IMR-90 (cell line): ENCODE measurements at regions of chr6 and their contacts with region 1.

Region 1: GRCh38 chr6:28586962-28587745 is 61.5 kb downstream of the GPX5 start:
- DNase-seq: no peak
- ATAC-seq: no peak
- H3K4me3 ChIP-seq: peak overlapping the region; percentile 40
- H3K27ac ChIP-seq: no peak overlapping the region
- H3K4me1 ChIP-seq: no peaks in the 10 kb centered on the region
- H3K27me3 ChIP-seq: peaks cover 2% of the 10 kb centered on the region; the same call in 1 of the 2 replicates
- CTCF ChIP-seq: no peak
- POLR2A ChIP-seq: no peak
- RAD21 ChIP-seq: no peak

Region 2: DNA sequence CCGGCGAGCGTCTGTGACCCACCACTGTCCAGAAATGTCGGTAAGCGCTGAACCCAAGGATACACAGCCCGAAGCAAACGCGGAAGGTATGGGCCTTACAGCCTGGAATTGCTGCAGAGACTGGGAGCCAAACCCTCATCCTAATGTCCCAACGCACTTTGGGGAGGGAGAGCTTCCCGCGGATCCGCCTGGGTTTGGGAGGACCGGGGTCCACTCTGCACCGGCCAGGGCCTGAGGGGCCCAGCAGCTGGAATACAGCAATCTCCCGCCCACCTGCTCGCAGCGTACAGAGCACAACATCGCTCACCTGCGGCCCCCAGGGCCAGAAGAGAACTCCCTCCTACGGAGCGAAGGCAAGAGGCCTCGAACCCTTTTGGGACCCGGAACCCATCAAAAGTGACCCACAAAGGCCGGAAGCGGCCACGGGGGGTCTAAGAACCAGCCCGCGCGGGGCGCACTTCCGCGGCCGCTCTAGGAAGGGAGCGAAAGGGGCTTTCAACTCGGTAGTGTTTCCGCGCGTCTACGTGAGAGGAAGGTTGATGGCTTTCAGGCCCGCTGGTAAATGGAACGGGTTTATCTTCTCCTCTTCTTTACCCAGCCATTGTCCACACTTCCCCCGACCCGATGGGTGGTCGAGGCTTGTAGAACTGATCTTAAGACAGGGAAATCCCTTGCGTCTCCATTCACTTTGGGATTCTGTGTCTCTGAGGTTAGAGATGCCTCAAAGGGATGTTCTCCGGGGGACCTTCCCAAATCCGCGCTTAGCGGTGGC is 187.6 kb before region 1 on chr6 and contains the start of gene ZSCAN12:
- CTCF ChIA-PET with region 1: no interaction called
- POLR2A ChIA-PET with region 1: no interaction called
- dilution Hi-C with region 1: no loop called
- in situ Hi-C with region 1: no loop called
- intact Hi-C with region 1: loop called (anchors 10 kb)
- DNase-seq: peak; percentile 89
- ATAC-seq: peak; percentile 98
- H3K4me3 ChIP-seq: peak within 1 kb of the TSS; percentile 90
- H3K27ac ChIP-seq: peak within 1 kb of the TSS; percentile 84
- H3K4me1 ChIP-seq: peaks cover 6% of the 10 kb centered on the region; the same call in 1 of the 2 replicates
- H3K27me3 ChIP-seq: no peaks in the 10 kb centered on the region
- CTCF ChIP-seq: peak; percentile 65
- POLR2A ChIP-seq: peak; percentile 76
- RAD21 ChIP-seq: no peak
- total RNA-seq, gene ZSCAN12: 6.4 and 6.5 TPM in 2 replicates

Region 3: DNA sequence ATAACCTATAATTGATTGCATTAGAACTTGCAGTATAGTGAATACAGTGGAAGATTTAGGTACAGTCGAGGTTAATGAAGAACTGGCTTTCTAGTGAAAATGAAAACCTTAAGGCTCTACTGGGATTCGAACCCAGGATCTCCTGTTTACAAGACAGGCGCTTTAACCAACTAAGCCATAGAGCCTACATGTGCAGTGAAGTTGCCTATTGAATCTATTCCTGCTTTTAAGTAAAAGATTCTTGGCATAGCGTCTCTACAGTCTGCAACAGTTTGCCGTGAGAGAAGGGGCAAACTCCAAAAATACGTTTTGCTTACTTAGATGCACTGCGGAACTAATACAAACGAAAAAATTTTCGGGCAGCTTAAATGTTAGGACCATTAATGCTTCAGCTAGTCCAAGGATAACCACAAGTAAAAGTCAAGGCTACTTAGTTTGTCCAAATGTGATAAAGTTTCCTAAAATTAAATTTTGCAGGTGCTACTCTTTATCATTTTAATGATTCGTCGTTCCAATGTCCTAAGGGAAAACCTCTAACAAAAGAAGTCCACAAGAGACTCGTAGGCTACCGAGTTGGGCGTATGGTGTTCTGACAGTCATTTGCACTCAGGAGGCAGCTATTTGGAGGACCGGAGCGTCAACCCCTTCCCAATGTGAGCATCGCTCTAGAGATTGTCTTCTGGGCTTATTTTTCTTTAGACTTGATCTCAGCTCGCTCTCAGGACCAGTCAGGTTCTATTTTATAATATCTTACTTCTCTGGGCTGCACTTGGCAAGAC is 112.5 kb before region 1 on chr6:
- CTCF ChIA-PET with region 1: no interaction called
- POLR2A ChIA-PET with region 1: no interaction called
- dilution Hi-C with region 1: no loop called
- in situ Hi-C with region 1: no loop called
- intact Hi-C with region 1: loop called (anchors 2 kb)
- DNase-seq: peak; percentile 92
- ATAC-seq: peak; percentile 98
- H3K4me3 ChIP-seq: peak overlapping the region; percentile 72
- H3K27ac ChIP-seq: no peak overlapping the region
- H3K4me1 ChIP-seq: no peaks in the 10 kb centered on the region
- H3K27me3 ChIP-seq: peaks cover 7% of the 10 kb centered on the region
- CTCF ChIP-seq: no peak
- POLR2A ChIP-seq: no peak
- RAD21 ChIP-seq: no peak

Region 4: GRCh38 chr6:28542440-28543296 is 44.5 kb before region 1 on chr6:
- CTCF ChIA-PET with region 1: no interaction called
- POLR2A ChIA-PET with region 1: no interaction called
- dilution Hi-C with region 1: no loop called
- in situ Hi-C with region 1: no loop called
- intact Hi-C with region 1: loop called (anchors 2 kb)
- DNase-seq: peak; percentile 91
- ATAC-seq: peak; percentile 96
- H3K4me3 ChIP-seq: peak overlapping the region; percentile 6; the same call in 1 of the 2 replicates
- H3K27ac ChIP-seq: no peak overlapping the region
- H3K4me1 ChIP-seq: no peaks in the 10 kb centered on the region
- H3K27me3 ChIP-seq: no peaks in the 10 kb centered on the region
- CTCF ChIP-seq: peak; percentile 35
- POLR2A ChIP-seq: no peak
- RAD21 ChIP-seq: peak; percentile 10; the same call in 1 of the 2 replicates

Region 5: GRCh38 chr6:28606424-28607400 is 19.6 kb after region 1 on chr6:
- CTCF ChIA-PET with region 1: no interaction called
- POLR2A ChIA-PET with region 1: no interaction called
- dilution Hi-C with region 1: no loop called
- in situ Hi-C with region 1: no loop called
- intact Hi-C with region 1: loop called (anchors 1 kb)
- DNase-seq: peak; percentile 72
- ATAC-seq: peak; percentile 99
- H3K4me3 ChIP-seq: peak overlapping the region; percentile 50
- H3K27ac ChIP-seq: no peak overlapping the region
- H3K4me1 ChIP-seq: no peaks in the 10 kb centered on the region
- H3K27me3 ChIP-seq: no peaks in the 10 kb centered on the region
- CTCF ChIP-seq: peak; percentile 25; the same call in 1 of the 2 replicates
- POLR2A ChIP-seq: no peak
- RAD21 ChIP-seq: no peak

Region 6: DNA sequence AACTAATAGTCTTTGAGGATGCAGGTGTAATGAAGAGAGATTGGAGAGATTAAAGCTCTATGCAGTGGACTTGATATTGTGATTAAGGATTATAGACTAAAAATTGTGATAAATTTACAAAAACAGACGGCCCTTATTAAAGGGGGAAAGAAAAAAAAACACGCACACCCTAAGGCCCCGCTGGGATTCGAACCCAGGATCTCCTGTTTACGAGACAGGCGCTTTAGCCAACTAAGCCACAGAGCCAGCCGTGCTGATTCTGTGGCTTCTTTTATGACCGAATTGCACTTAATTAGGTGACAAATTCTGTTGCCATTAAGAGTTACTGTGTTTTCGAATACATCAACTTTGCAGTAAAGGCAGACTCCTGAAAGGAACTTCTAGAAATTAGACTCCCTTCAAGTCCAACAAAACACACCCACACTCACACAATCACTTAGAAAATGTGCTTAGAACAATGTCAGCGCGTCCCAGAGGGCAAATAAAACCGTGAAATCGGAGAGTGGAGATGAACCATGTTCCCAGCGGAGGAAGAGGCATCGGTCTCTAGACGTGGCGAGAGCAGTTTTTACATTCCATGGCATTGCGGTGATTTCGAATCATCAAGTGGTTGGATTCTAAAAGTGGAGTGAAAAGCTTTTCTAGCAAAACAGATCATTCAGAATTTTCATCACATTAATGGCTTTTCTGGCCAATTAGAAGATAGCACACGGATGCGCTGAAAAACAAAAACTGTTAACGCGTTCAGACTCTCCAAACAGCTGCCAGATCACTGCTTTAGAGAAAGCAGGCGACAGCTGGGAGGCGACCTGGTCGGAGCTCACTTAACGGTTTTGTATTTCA is 61.1 kb after region 1 on chr6:
- CTCF ChIA-PET with region 1: interaction called, 3 read pairs
- POLR2A ChIA-PET with region 1: no interaction called
- dilution Hi-C with region 1: no loop called
- in situ Hi-C with region 1: no loop called
- intact Hi-C with region 1: loop called (anchors 2 kb)
- DNase-seq: peak; percentile 74
- ATAC-seq: peak; percentile 86
- H3K4me3 ChIP-seq: peak overlapping the region; percentile 92
- H3K27ac ChIP-seq: no peak overlapping the region
- H3K4me1 ChIP-seq: no peaks in the 10 kb centered on the region
- H3K27me3 ChIP-seq: no peaks in the 10 kb centered on the region
- CTCF ChIP-seq: no peak
- POLR2A ChIP-seq: no peak
- RAD21 ChIP-seq: no peak